Naive thymus-derived CD8-positive, alpha-beta T cell (primary cell): ENCODE measurements at regions of chr12 and their contacts with region 1.

Region 1: DNA sequence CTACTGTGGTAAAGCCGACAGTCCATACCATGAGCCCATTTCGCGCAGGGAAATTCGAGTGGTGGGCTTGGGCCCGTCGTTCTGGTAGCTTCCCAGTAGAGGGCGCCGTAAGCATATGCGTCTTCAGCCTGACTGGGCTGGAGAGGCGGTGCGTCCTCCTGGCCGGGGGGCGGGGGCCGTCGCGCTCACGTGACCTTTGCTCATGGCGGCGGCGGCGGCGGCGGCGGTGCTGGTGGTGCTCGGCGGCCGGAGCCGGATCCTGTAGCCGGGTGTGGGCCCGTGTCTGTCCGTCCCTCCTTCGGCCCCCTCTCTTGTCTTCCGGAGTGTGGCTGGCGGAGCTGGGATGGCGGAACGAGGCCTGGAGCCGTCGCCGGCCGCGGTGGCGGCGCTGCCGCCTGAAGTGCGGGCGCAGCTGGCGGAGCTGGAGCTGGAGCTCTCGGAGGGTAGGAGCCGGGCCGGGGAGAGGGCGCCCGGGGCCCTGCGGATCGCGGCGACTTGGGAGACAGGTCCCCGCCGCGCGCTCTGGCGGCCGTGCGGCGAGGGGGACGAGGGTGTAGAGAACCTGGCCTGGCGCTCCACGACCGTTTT is at the start of gene DIP2B:
- DNase-seq: peak; percentile 90 to 97 (median 94)
- ATAC-seq: peak; percentile 85 to 86
- H3K4me3 Mint-ChIP-seq: peak within 1 kb of the TSS; percentile 93 to 98 (median 96)
- H3K27ac Mint-ChIP-seq: peak within 1 kb of the TSS; percentile 87 to 95 (median 95)
- H3K4me1 Mint-ChIP-seq: peaks cover 32 to 49% (median 46%) of the 10 kb centered on the region in 4 donors
- H3K27me3 Mint-ChIP-seq: peaks cover 0 to 1% (median 0%) of the 10 kb centered on the region in 5 donors
- polyA plus RNA-seq, gene DIP2B: 6.2 to 13.5 (median 9.4) TPM

Region 2: DNA sequence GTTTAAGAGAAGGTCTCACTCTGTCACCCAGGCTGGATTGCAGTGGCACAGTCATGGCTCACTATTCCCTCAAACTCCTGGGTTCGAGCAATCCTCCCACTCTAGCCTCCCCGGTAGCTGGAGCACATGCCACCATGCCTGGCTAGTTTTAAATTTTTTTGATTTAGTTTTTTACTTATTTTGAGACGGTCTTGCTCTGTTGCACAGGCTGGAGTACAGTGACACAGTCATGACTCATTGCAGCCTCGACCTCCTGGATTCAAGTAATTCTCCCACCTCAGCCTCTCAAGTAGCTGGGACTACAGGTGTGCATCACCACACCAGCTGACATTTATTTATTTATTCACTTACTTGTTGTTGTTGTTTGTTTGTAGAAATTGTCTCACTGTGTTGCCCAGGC is 22.3 kb before region 1 on chr12:
- POLR2A ChIA-PET with region 1: no interaction called
- DNase-seq: no peak
- ATAC-seq: no peak
- H3K4me3 Mint-ChIP-seq: no peak overlapping the region
- H3K27ac Mint-ChIP-seq: peak overlapping the region in 2 of 10 donors; percentile 33 to 53
- H3K4me1 Mint-ChIP-seq: no peaks in the 10 kb centered on the region
- H3K27me3 Mint-ChIP-seq: no peaks in the 10 kb centered on the region

Region 3: DNA sequence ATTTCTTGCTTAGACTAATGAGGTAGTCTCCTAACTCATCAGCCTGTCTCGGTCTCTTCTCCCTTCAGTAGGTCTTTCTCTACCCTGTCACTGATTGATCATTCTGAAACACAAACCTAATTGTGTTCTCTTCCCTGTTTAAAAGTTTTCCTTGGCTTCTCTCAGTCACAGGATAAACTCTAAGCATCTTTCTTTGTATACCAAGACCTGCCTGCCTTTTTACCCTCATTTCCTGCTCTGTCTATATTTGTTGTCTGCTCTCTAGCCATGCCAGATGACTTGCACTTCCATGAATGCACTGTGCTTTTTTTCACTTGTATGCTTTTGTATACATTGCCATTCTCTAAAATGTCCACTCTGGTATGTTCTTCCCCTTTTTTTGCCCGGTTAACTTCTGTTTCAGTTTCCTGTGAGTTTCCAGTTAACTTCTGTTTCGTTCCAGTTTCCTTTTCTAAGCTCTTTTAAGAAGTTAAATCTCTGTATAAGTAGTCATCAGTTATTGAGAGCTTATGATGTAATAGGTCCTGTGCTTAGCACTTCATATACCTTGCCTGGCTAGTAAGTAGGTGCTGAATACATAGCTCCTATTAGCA is 12.7 kb after region 1 on chr12:
- POLR2A ChIA-PET with region 1: interaction called, 26 read pairs
- DNase-seq: peak in 1 of 10 donors; percentile 25
- ATAC-seq: peak; percentile 52 to 73
- H3K4me3 Mint-ChIP-seq: no peak overlapping the region
- H3K27ac Mint-ChIP-seq: no peak overlapping the region
- H3K4me1 Mint-ChIP-seq: peaks cover 28 to 62% (median 52%) of the 10 kb centered on the region in 4 donors
- H3K27me3 Mint-ChIP-seq: no peaks in the 10 kb centered on the region

Region 4: DNA sequence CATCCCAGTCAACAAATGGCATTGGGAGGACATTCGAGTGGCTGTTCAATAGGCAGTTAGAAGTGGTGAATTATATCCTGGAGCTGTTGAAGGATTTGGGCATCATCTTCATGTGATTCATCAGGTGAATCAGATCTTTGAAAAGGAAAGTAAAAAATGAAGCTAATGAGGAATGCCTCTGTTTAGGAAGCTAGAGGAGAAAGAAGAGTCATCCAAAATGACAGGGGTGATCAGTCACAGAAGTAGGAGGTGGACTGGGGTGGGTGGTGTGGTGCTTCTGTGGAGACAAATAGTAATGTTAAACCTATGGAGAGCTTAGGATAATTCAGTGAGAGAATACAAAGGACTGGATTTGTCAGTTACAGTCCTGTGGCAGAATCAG is 32.6 kb after region 1 on chr12:
- POLR2A ChIA-PET with region 1: interaction called, 15 read pairs
- DNase-seq: no peak
- ATAC-seq: no peak
- H3K4me3 Mint-ChIP-seq: peak overlapping the region in 1 of 10 donors; percentile 17
- H3K27ac Mint-ChIP-seq: peak overlapping the region in 4 of 10 donors; percentile 2 to 56 (median 25)
- H3K4me1 Mint-ChIP-seq: peaks cover 13 to 45% (median 30%) of the 10 kb centered on the region in 4 donors
- H3K27me3 Mint-ChIP-seq: no peaks in the 10 kb centered on the region

Region 5: GRCh38 chr12:50637870-50638481 is 133.1 kb after region 1 on chr12:
- POLR2A ChIA-PET with region 1: interaction called, 14 read pairs
- DNase-seq: peak in 3 of 10 donors; percentile 54 to 66 (median 64)
- ATAC-seq: peak; percentile 63 to 65
- H3K4me3 Mint-ChIP-seq: no peak overlapping the region
- H3K27ac Mint-ChIP-seq: peak overlapping the region; percentile 44 to 89 (median 70)
- H3K4me1 Mint-ChIP-seq: peaks cover 18 to 51% (median 38%) of the 10 kb centered on the region in 4 donors
- H3K27me3 Mint-ChIP-seq: no peaks in the 10 kb centered on the region

Region 6: DNA sequence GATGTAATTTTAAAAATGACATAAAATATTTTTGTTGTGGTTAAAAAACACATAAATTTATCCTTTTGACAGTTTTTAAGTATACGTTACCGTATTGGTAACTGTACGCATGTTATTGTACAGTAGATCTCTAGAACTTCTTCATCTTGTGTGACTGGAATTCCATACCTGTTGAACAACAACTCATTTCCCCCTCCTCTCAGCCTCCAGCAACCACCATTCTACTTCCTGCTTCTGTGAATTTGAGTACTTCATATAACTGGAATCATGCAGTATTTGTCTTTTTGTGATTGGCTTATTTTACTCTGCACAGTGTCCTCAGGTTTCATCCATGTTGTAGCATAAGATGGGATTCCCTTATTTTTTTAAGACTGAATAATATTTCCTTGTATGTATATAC is 145.4 kb after region 1 on chr12:
- POLR2A ChIA-PET with region 1: no interaction called
- DNase-seq: no peak
- ATAC-seq: no peak
- H3K4me3 Mint-ChIP-seq: no peak overlapping the region
- H3K27ac Mint-ChIP-seq: peak overlapping the region in 2 of 10 donors; percentile 43 to 74
- H3K4me1 Mint-ChIP-seq: peaks cover 9 to 24% (median 16%) of the 10 kb centered on the region in 4 donors
- H3K27me3 Mint-ChIP-seq: no peaks in the 10 kb centered on the region